ENCODE measurements at regions of chr11 and their contacts with region 1.

Region 1: DNA sequence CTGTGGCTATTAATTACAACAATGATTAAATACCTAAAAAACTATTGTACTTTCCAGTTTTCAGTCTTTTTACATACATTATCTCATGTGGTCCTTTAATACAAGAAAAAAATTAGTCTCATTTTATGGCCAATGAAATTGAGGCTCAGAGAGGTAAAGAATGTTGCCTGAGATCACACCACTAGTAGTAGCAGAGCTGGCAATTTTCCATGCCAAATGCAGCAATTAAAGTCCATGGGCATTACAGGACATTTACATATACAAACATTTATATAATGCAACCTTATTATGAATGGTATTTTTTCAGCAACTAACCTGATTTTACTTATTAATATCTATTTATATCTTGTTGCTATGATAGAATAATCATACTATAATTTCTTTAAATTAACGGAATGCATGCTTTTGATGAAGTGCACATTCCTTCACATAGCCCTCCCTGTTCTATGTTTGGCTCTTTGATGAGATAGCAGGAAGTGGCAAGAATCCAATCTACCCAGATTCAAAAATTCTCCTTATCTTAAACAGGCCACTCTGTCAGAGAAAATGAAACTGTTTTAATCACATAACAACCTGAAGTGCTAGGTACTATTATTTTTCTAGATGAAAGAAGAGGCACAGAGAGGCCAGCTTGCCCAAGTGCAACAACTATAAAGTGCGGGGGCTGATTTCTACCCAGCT is 120.9 kb upstream of the LDLRAD3 start:
- DNase-seq: no peak
- H3K4me3 ChIP-seq: no peak overlapping the region
- CTCF ChIP-seq: no peak

Region 2: DNA sequence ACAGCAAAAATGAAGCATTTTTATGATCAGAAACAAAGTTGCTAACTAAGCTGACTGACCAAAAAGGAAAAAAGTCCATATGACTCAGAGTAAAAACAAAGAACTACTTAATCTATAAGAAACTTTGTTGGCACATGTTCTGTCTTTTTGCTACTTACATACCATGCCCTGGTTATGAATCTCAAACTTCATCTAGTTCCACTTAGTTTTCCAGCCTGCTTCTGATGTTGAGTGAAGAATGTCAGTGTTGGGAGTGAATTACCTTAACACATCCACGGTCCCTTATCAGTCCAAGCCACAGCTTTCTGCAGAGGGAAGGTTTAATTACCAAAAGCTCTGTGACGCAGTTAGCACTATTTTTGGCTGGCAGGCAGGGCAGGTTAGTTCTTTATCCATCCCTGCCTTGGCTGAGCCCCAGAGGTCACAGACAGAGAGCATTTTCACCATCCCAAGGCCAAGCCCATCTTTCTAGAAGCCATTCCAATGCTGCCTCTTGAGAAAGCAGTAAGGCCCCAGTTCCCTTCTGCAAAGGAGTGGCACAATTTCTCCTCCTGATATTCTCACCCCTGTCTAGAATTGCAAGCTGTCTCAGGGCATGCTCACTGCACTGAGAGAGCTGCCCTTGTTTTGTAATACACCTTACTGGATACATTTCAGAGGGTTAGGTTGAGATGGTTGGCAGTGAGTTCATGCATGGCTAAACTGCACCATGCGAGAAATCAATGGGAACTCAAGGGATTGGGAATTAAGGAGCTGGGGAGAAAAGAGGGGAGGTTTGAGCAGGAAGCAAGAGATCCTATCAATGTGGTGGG is 470.7 kb before region 1 on chr11:
- CTCF ChIA-PET with region 1: no interaction called
- POLR2A ChIA-PET with region 1: no interaction called
- DNase-seq: peak; percentile 59
- H3K4me3 ChIP-seq: no peak overlapping the region
- CTCF ChIP-seq: no peak

Region 3: DNA sequence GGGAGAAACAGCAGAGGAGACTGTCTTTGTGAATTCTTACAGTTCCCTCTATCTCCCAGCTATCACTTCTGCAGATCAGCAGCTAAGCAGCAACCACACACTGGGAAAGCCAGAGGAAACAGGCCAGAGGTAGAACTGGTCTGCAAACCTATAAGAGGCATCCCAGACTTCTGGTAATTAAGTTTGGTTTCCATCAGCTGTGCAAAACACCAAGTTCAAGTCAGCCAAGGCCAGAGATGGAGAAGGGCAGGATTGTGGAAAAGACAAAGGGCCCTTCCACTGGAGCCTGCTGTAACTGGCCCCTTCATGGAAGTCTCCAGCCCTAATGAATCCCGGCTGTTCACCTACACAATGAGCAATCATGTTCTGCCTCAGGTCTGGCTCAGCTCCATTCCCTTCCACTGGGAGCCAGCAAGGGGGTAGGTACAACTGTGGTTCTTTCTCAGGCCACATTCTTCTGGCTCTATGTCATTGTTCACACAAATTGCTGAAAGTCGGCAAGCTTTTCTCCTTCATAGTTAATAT is 292.9 kb before region 1 on chr11:
- CTCF ChIA-PET with region 1: no interaction called
- POLR2A ChIA-PET with region 1: no interaction called
- DNase-seq: peak; percentile 87
- H3K4me3 ChIP-seq: no peak overlapping the region
- CTCF ChIP-seq: no peak

Region 4: GRCh38 chr11:35623621-35624168 is 199.3 kb before region 1 on chr11:
- CTCF ChIA-PET with region 1: interaction called, 22 read pairs
- POLR2A ChIA-PET with region 1: no interaction called
- DNase-seq: peak; percentile 62
- H3K4me3 ChIP-seq: no peak overlapping the region
- CTCF ChIP-seq: no peak

Region 5: DNA sequence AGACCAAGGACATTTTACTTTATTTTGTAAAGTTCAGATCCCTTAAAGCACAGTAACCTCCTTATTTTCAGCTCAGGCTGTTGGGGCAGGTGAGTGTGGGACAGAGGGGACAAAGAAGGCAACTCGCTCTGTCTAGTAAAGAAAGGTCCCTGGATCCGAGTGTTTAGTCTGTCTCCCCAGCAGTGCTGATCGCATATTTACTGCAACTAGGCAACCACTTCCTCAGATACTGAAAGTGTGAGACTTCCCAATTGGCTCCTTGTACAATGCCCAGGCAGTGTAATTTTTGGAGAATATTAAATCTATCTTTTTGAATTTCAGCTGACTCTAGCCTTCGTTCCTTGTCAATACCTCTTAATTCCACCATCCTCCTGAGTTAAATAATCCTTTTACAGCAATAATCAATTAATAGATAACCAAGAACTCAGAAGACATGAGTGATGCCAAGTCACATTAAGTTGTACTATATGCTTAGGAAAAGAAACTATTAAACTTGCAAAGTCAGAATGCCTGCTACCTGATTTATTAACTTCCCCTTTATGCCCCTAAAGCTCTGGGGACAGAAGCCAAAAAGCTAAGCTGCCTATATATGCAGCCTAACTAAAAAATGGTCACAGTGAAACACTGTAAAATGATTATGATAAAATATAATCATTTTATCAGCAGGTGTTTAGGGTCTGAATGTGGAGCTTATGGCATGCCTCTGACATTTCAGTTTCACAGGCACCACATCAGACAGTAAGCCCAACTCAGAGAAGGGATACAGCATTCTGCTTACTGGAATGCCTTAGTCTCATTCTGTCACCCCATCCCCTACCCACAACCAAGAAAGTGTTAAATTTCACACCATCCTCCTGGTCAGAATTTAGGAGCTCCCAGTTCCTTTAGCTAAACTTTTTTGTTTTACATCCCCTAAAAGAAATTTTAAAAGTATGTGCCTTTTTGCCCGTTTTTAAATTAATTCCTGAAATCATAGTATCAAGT is 21.7 kb before region 1 on chr11:
- CTCF ChIA-PET with region 1: interaction called, 197 read pairs
- POLR2A ChIA-PET with region 1: interaction called, 3 read pairs
- DNase-seq: no peak
- H3K4me3 ChIP-seq: no peak overlapping the region
- CTCF ChIP-seq: no peak

Region 6: GRCh38 chr11:35919244-35919643 is 96.3 kb after region 1 on chr11:
- CTCF ChIA-PET with region 1: interaction called, 11 read pairs
- POLR2A ChIA-PET with region 1: no interaction called
- DNase-seq: no peak
- H3K4me3 ChIP-seq: no peak overlapping the region
- CTCF ChIP-seq: no peak

Region 7: GRCh38 chr11:36073411-36074203 is 250.7 kb after region 1 on chr11:
- CTCF ChIA-PET with region 1: interaction called, 13 read pairs
- POLR2A ChIA-PET with region 1: interaction called, 5 read pairs
- DNase-seq: peak; percentile 40
- H3K4me3 ChIP-seq: no peak overlapping the region
- CTCF ChIP-seq: no peak

Region 8: GRCh38 chr11:36149538-36150242 is 326.7 kb after region 1 on chr11:
- CTCF ChIA-PET with region 1: interaction called, 19 read pairs
- POLR2A ChIA-PET with region 1: no interaction called
- DNase-seq: peak; percentile 88
- H3K4me3 ChIP-seq: no peak overlapping the region
- CTCF ChIP-seq: peak; percentile 41

Region 9: GRCh38 chr11:36265793-36266628 is 443.1 kb after region 1 on chr11:
- CTCF ChIA-PET with region 1: interaction called, 101 read pairs
- POLR2A ChIA-PET with region 1: no interaction called
- DNase-seq: no peak
- H3K4me3 ChIP-seq: no peak overlapping the region
- CTCF ChIP-seq: peak; percentile 87